ENCODE measurements at regions of chr12 and their contacts with region 1.

Region 1: GRCh38 chr12:82627569-82628198 is 59.0 kb upstream of the TMTC2 start:
- DNase-seq: peak; percentile 6
- H3K4me3 Mint-ChIP-seq: no peak overlapping the region
- H3K27ac Mint-ChIP-seq: no peak overlapping the region
- H3K4me1 Mint-ChIP-seq: peaks cover 5% of the 10 kb centered on the region
- H3K27me3 Mint-ChIP-seq: no peaks in the 10 kb centered on the region
- CTCF ChIP-seq: peak; percentile 64

Region 2: DNA sequence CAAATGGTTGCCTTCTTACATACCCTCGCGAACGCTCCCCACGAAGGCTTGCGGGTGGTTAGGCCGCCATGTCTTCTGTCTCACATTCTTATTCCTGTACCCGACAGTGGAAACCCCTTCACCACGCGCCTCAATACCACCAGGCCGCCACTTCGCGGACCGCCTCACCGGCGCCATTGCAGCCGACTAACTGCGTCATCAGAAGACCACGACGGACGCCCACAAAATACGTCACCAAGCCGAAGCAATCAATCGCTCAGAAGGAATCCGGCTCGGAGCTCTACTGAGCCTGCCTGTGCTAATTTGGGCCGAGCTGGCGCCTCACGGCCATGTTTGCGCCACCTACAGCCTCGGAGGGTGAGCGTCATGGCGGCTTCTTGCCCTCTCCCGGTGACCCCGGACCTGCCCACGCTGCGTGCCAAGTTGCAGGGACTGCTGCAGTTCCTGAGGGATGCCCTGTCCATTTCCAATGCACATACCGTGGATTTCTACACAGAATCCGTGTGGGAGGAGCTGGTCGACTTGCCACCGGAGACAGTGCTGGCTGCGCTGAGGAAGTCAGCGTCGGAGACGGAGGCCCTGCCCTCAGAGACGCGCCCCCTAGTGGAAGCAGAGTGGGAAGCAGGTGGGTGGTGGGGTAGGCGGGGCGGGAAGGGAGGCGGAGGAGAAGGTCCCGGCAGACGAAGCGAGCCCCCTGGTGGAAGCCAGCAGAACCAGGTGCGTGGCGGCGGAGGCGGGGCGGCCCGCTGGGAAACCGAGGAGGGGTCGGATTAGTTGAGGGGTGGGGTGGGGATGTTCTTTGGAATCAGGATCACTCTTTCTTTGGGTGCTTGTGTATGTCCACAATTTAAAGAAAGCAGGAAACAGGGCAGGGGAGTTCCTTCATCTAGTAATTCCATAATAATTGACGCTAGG is 269.2 kb before region 1 on chr12 and contains the starts of genes CCDC59 and METTL25:
- CTCF ChIA-PET with region 1: interaction called, 3 read pairs
- intact Hi-C with region 1: loop called (anchors 1 kb)
- DNase-seq: peak; percentile 98
- H3K4me3 Mint-ChIP-seq: peak within 1 kb of the TSS; percentile 94
- H3K27ac Mint-ChIP-seq: peak within 1 kb of the TSS; percentile 100
- H3K4me1 Mint-ChIP-seq: peaks cover 17% of the 10 kb centered on the region
- H3K27me3 Mint-ChIP-seq: no peaks in the 10 kb centered on the region
- CTCF ChIP-seq: peak; percentile 91
- total RNA-seq, gene CCDC59: 51.7 and 55.8 TPM in 2 replicates
- total RNA-seq, gene METTL25: 6.7 and 7.2 TPM in 2 replicates

Region 3: GRCh38 chr12:82383930-82384552 is 243.6 kb before region 1 on chr12:
- CTCF ChIA-PET with region 1: interaction called, 17 read pairs
- intact Hi-C with region 1: loop called (anchors 1 kb)
- DNase-seq: peak; percentile 20
- H3K4me3 Mint-ChIP-seq: no peak overlapping the region
- H3K27ac Mint-ChIP-seq: no peak overlapping the region
- H3K4me1 Mint-ChIP-seq: no peaks in the 10 kb centered on the region
- H3K27me3 Mint-ChIP-seq: no peaks in the 10 kb centered on the region
- CTCF ChIP-seq: no peak